ENCODE measurements at regions of chr13 and their contacts with region 1.

Region 1: GRCh38 chr13:26221721-26222519 is at the start of gene RNF6:
- DNase-seq: peak; percentile 98
- H3K4me3 ChIP-seq: peak within 1 kb of the TSS; percentile 94 to 100 (median 96)
- H3K27ac ChIP-seq: peak within 1 kb of the TSS; percentile 97 to 98 (median 97)
- H3K4me1 ChIP-seq: peaks cover 17 to 34% (median 26%) of the 10 kb centered on the region in 4 donors
- H3K27me3 ChIP-seq: no peaks in the 10 kb centered on the region
- CTCF ChIP-seq: peak in 1 of 3 experiments; percentile 3
- EP300 ChIP-seq: no peak
- POLR2A ChIP-seq: peak; percentile 43
- total RNA-seq, gene RNF6: 17.0 to 24.4 (median 23.5) TPM

Region 2: DNA sequence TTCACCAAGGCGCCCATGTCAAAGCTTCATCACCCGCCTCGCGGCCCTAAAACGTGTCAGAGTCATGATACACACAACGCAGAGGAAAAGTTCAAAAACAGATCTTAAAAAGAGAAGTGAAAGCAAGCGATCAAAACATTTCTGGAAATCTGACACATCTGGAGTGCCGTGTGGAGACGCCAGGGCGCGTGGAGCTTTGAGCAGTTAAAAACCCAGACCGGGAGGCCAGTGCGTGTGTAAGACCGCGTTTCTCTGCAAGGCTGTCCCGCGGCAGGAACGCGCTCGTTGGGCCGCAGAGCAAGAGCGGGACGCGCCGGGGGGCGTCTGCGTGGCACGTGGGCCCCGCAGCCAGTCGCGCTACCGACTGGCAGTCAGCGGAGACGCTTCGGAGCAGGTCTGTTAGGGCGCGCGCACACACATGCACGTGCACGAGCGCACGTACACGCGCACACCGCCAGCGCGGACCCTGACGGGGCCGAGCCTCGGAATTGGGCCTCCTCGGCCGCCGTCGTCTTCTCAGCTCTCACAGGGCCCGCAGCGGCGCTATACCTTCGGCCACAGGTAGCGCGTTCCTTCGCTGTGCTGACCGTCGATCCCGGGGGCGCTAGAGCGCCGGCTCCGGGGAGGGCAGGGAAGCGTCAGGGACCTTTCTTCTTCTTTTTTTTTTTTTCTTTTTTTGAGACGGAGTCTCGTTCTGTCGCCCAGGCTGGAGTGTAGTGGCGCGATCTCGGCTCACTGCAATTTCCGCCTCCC is 35.6 kb before region 1 on chr13:
- intact Hi-C with region 1: loop called (anchors 5 kb)
- DNase-seq: peak; percentile 94
- H3K4me3 ChIP-seq: peak overlapping the region; percentile 68 to 82 (median 76)
- H3K27ac ChIP-seq: peak overlapping the region; percentile 78 to 89 (median 84)
- H3K4me1 ChIP-seq: peaks cover 7 to 26% (median 18%) of the 10 kb centered on the region in 4 donors
- H3K27me3 ChIP-seq: no peaks in the 10 kb centered on the region
- CTCF ChIP-seq: peak; percentile 17 to 35 (median 28)
- EP300 ChIP-seq: no peak
- POLR2A ChIP-seq: no peak

Region 3: DNA sequence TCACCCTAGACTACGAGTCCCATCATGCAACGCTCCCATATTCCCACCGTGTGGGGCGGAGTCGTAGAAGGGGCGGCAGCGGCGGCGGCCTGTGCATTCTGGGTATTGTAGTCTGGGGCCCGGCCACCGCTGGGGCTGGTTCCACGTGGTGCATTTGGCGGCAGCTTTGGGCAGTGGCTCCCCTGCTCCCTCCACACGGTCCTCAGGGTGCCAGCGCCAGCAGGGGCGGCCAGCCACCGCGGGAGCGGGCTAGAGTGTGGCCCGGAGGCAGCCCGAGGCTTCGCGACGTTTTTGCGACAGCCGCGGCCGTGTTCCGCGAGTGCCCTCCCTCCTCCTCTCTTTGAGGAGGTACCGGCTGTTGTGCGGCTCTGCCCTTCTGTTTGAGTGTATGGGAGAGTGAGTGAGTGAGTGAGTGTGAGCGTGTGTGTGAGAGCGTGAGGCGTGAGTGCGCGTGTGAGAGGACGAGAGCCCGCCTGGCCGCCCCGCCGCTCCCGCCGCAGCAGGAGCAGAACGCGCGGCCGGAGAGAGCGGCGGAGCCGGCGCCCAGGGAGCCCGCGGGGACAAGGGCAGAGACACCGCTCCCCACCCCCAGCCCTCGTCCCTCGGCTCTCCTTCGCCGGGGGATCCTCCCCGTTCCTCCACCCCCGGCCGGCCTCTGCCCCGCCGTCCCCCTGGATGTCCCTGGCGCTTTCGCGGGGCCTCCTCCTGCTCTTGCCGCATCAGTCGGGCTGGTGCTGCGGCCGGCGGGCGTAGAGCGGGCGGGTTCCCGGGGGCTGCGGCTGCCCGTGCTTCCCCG is 32.1 kb after region 1 on chr13 and contains the start of gene CDK8:
- intact Hi-C with region 1: loop called (anchors 2 kb)
- DNase-seq: peak; percentile 95
- H3K4me3 ChIP-seq: peak within 1 kb of the TSS; percentile 88 to 98 (median 93)
- H3K27ac ChIP-seq: peak within 1 kb of the TSS; percentile 94 to 95 (median 95)
- H3K4me1 ChIP-seq: peaks cover 16 to 28% (median 28%) of the 10 kb centered on the region in 4 donors
- H3K27me3 ChIP-seq: no peaks in the 10 kb centered on the region
- CTCF ChIP-seq: no peak
- EP300 ChIP-seq: no peak
- POLR2A ChIP-seq: no peak
- total RNA-seq, gene CDK8: 20.3 to 26.3 (median 23.8) TPM